ENCODE measurements at regions of chr12 and their contacts with region 1.

Region 1: GRCh38 chr12:87661786-87662377 is 367.3 kb downstream of the C12orf50 start:
- DNase-seq: no peak
- H3K4me3 Mint-ChIP-seq: peak overlapping the region; percentile 57
- H3K27ac Mint-ChIP-seq: peak overlapping the region; percentile 59
- H3K4me1 Mint-ChIP-seq: peaks cover 20% of the 10 kb centered on the region
- H3K27me3 Mint-ChIP-seq: no peaks in the 10 kb centered on the region
- CTCF ChIP-seq: no peak

Region 2: GRCh38 chr12:87344699-87345098 is 317.2 kb before region 1 on chr12:
- CTCF ChIA-PET with region 1: interaction called, 6 read pairs
- POLR2A ChIA-PET with region 1: no interaction called
- intact Hi-C with region 1: loop called (anchors 5 kb)
- DNase-seq: peak; percentile 2
- H3K4me3 Mint-ChIP-seq: no peak overlapping the region
- H3K27ac Mint-ChIP-seq: no peak overlapping the region
- H3K4me1 Mint-ChIP-seq: peaks cover 6% of the 10 kb centered on the region
- H3K27me3 Mint-ChIP-seq: no peaks in the 10 kb centered on the region
- CTCF ChIP-seq: no peak

Measured in MCF 10A (cell line).